B cell (primary cell): ENCODE measurements at regions of chr5 and their contacts with region 1.

Region 1: GRCh38 chr5:118987988-118988865 is at the start of gene DTWD2:
- DNase-seq: peak; percentile 97
- ATAC-seq: peak; percentile 87
- H3K4me3 ChIP-seq: peak within 1 kb of the TSS; percentile 63 to 86 (median 76)
- H3K4me3 Mint-ChIP-seq: peak within 1 kb of the TSS; percentile 91
- H3K27ac ChIP-seq: peak within 1 kb of the TSS; percentile 66 to 73
- H3K27ac Mint-ChIP-seq: peak within 1 kb of the TSS; percentile 90
- H3K4me1 ChIP-seq: peaks cover 17% of the 10 kb centered on the region in 2 donors
- H3K4me1 Mint-ChIP-seq: peaks cover 32% of the 10 kb centered on the region
- H3K27me3 ChIP-seq: no peaks in the 10 kb centered on the region
- H3K27me3 Mint-ChIP-seq: no peaks in the 10 kb centered on the region
- CTCF ChIP-seq: peak; percentile 99
- total RNA-seq, gene DTWD2: 6.0 and 6.3 TPM in 2 replicates

Region 2: GRCh38 chr5:118692811-118693342 is 295.4 kb before region 1 on chr5:
- CTCF ChIA-PET with region 1: no interaction called
- POLR2A ChIA-PET with region 1: no interaction called
- intact Hi-C with region 1: no loop called
- DNase-seq: no peak
- ATAC-seq: no peak
- H3K4me3 ChIP-seq: no peak overlapping the region
- H3K4me3 Mint-ChIP-seq: no peak overlapping the region
- H3K27ac ChIP-seq: no peak overlapping the region
- H3K27ac Mint-ChIP-seq: no peak overlapping the region
- H3K4me1 ChIP-seq: no peaks in the 10 kb centered on the region
- H3K4me1 Mint-ChIP-seq: no peaks in the 10 kb centered on the region
- H3K27me3 ChIP-seq: no peaks in the 10 kb centered on the region
- H3K27me3 Mint-ChIP-seq: peaks cover 4% of the 10 kb centered on the region
- CTCF ChIP-seq: no peak

Region 3: GRCh38 chr5:119011186-119011585 is 23.0 kb after region 1 on chr5:
- CTCF ChIA-PET with region 1: interaction called, 25 read pairs
- POLR2A ChIA-PET with region 1: no interaction called
- intact Hi-C with region 1: no loop called
- DNase-seq: no peak
- ATAC-seq: no peak
- H3K4me3 ChIP-seq: no peak overlapping the region
- H3K4me3 Mint-ChIP-seq: no peak overlapping the region
- H3K27ac ChIP-seq: no peak overlapping the region
- H3K27ac Mint-ChIP-seq: no peak overlapping the region
- H3K4me1 ChIP-seq: peaks cover 9 to 11% of the 10 kb centered on the region in 2 donors
- H3K4me1 Mint-ChIP-seq: peaks cover 14% of the 10 kb centered on the region
- H3K27me3 ChIP-seq: no peaks in the 10 kb centered on the region
- H3K27me3 Mint-ChIP-seq: no peaks in the 10 kb centered on the region
- CTCF ChIP-seq: no peak

Region 4: GRCh38 chr5:119105971-119106370 is 117.7 kb after region 1 on chr5:
- CTCF ChIA-PET with region 1: interaction called, 12 read pairs
- POLR2A ChIA-PET with region 1: no interaction called
- intact Hi-C with region 1: no loop called
- DNase-seq: no peak
- ATAC-seq: no peak
- H3K4me3 ChIP-seq: no peak overlapping the region
- H3K4me3 Mint-ChIP-seq: no peak overlapping the region
- H3K27ac ChIP-seq: no peak overlapping the region
- H3K27ac Mint-ChIP-seq: no peak overlapping the region
- H3K4me1 ChIP-seq: no peaks in the 10 kb centered on the region
- H3K4me1 Mint-ChIP-seq: peaks cover 5% of the 10 kb centered on the region
- H3K27me3 ChIP-seq: no peaks in the 10 kb centered on the region
- H3K27me3 Mint-ChIP-seq: no peaks in the 10 kb centered on the region
- CTCF ChIP-seq: no peak

Region 5: GRCh38 chr5:119239119-119239417 is 250.8 kb after region 1 on chr5:
- CTCF ChIA-PET with region 1: interaction called, 12 read pairs
- POLR2A ChIA-PET with region 1: no interaction called
- intact Hi-C with region 1: no loop called
- DNase-seq: no peak
- ATAC-seq: no peak
- H3K4me3 ChIP-seq: no peak overlapping the region
- H3K4me3 Mint-ChIP-seq: no peak overlapping the region
- H3K27ac ChIP-seq: no peak overlapping the region
- H3K27ac Mint-ChIP-seq: no peak overlapping the region
- H3K4me1 ChIP-seq: no peaks in the 10 kb centered on the region
- H3K4me1 Mint-ChIP-seq: no peaks in the 10 kb centered on the region
- H3K27me3 ChIP-seq: no peaks in the 10 kb centered on the region
- H3K27me3 Mint-ChIP-seq: no peaks in the 10 kb centered on the region
- CTCF ChIP-seq: no peak

Region 6: GRCh38 chr5:119315516-119315949 is 327.3 kb after region 1 on chr5:
- CTCF ChIA-PET with region 1: interaction called, 13 read pairs
- POLR2A ChIA-PET with region 1: no interaction called
- intact Hi-C with region 1: loop called (anchors 5 kb)
- DNase-seq: peak; percentile 82
- ATAC-seq: peak; percentile 81
- H3K4me3 ChIP-seq: peak overlapping the region in 1 of 5 experiments; percentile 39
- H3K4me3 Mint-ChIP-seq: peak overlapping the region; percentile 66
- H3K27ac ChIP-seq: peak overlapping the region; percentile 57 to 65
- H3K27ac Mint-ChIP-seq: peak overlapping the region; percentile 90
- H3K4me1 ChIP-seq: peaks cover 95% of the 10 kb centered on the region in 2 donors
- H3K4me1 Mint-ChIP-seq: peaks cover 89% of the 10 kb centered on the region
- H3K27me3 ChIP-seq: no peaks in the 10 kb centered on the region
- H3K27me3 Mint-ChIP-seq: no peaks in the 10 kb centered on the region
- CTCF ChIP-seq: peak; percentile 68

Region 7: GRCh38 chr5:119418531-119419116 is 430.4 kb after region 1 on chr5:
- CTCF ChIA-PET with region 1: interaction called, 86 read pairs
- POLR2A ChIA-PET with region 1: interaction called, 3 read pairs
- intact Hi-C with region 1: no loop called
- DNase-seq: peak; percentile 59
- ATAC-seq: peak; percentile 44
- H3K4me3 ChIP-seq: peak overlapping the region in 2 of 5 experiments; percentile 3 to 16
- H3K4me3 Mint-ChIP-seq: peak overlapping the region; percentile 65
- H3K27ac ChIP-seq: peak overlapping the region; percentile 82 to 83
- H3K27ac Mint-ChIP-seq: peak overlapping the region; percentile 91
- H3K4me1 ChIP-seq: peaks cover 60 to 62% of the 10 kb centered on the region in 2 donors
- H3K4me1 Mint-ChIP-seq: peaks cover 72% of the 10 kb centered on the region
- H3K27me3 ChIP-seq: no peaks in the 10 kb centered on the region
- H3K27me3 Mint-ChIP-seq: no peaks in the 10 kb centered on the region
- CTCF ChIP-seq: no peak